ENCODE measurements at regions of chr5 and their contacts with region 1.

Region 1: GRCh38 chr5:152142840-152143469 is 218.3 kb upstream of the GLRA1 start:
- DNase-seq: no peak
- H3K4me3 ChIP-seq: no peak overlapping the region
- H3K27me3 ChIP-seq: no peaks in the 10 kb centered on the region
- CTCF ChIP-seq: peak; percentile 90

Region 2: GRCh38 chr5:151815051-151815450 is 327.9 kb before region 1 on chr5:
- CTCF ChIA-PET with region 1: interaction called, 18 read pairs
- POLR2A ChIA-PET with region 1: no interaction called
- DNase-seq: no peak
- H3K4me3 ChIP-seq: no peak overlapping the region
- H3K27me3 ChIP-seq: no peaks in the 10 kb centered on the region
- CTCF ChIP-seq: no peak

Region 3: DNA sequence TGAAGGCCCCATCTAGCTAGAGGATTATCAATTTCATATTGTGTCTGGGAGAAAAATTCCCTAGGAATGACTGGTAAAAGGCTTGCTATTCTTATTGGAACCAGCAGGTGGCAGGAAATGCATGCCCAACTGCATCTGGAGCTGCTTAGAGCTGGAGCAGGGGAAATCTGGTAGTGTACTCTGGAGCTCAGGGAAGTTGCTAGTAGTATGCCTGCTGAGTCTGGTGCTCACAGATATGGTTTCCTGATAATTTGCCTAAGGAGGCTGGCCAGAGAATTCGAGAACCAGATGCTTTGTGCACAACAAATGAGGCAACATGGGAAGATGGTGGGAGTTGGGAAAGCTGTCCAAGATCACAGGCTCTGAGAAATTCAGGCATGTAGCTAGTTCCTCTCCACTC is 317.5 kb before region 1 on chr5:
- CTCF ChIA-PET with region 1: interaction called, 203 read pairs
- POLR2A ChIA-PET with region 1: no interaction called
- DNase-seq: peak; percentile 13
- H3K4me3 ChIP-seq: no peak overlapping the region
- H3K27me3 ChIP-seq: no peaks in the 10 kb centered on the region
- CTCF ChIP-seq: peak; percentile 89

Region 4: GRCh38 chr5:152164860-152165259 is 21.9 kb after region 1 on chr5:
- CTCF ChIA-PET with region 1: interaction called, 12 read pairs
- POLR2A ChIA-PET with region 1: no interaction called
- DNase-seq: no peak
- H3K4me3 ChIP-seq: no peak overlapping the region
- H3K27me3 ChIP-seq: no peaks in the 10 kb centered on the region
- CTCF ChIP-seq: no peak

Measured in BJ (cell line).